Gastrocnemius medialis (tissue), 4 donors: ENCODE measurements at regions of chr6 and their contacts with region 1.

Region 1: GRCh38 chr6:133368664-133369063 is 127.5 kb downstream of the EYA4 start:
- DNase-seq: peak; percentile 76 to 85
- ATAC-seq: peak; percentile 92 to 97
- H3K4me3 ChIP-seq: no peak overlapping the region
- H3K27ac ChIP-seq: peak overlapping the region; percentile 68 to 80 (median 74)
- H3K4me1 ChIP-seq: peaks cover 51 to 81% of the 10 kb centered on the region in 2 donors
- H3K27me3 ChIP-seq: no peaks in the 10 kb centered on the region
- CTCF ChIP-seq: peak; percentile 36 to 73 (median 55)
- POLR2A ChIP-seq: no peak

Region 2: DNA sequence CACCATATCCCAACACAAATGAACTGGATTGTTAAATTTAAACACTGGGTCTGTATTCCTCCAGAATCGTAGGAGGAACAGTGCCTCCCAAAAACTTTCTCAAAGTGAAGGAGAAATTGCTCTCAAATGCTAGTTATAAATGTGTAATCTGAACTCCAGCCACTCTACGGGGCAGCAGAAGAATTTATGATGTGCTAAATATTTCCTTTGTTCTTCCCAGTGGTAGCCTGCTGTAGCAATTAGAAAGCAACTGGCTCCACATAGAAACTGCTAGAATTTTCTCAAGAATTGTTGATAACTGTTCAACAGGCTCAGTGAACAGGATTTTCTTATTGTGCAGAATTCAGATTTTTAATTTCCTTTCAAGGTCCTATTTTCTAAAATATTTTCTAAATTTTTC is 177.3 kb before region 1 on chr6:
- in situ Hi-C with region 1: no loop called
- intact Hi-C with region 1: loop called (anchors 5 kb)
- DNase-seq: no peak
- ATAC-seq: peak; percentile 38 to 49
- H3K4me3 ChIP-seq: no peak overlapping the region
- H3K27ac ChIP-seq: peak overlapping the region in 1 of 4 donors; percentile 61
- H3K4me1 ChIP-seq: peaks cover 5 to 9% of the 10 kb centered on the region in 2 donors
- H3K27me3 ChIP-seq: no peaks in the 10 kb centered on the region
- CTCF ChIP-seq: no peak
- POLR2A ChIP-seq: no peak

Region 3: GRCh38 chr6:133286765-133287164 is 81.9 kb before region 1 on chr6:
- in situ Hi-C with region 1: no loop called
- intact Hi-C with region 1: loop called (anchors 1 kb)
- DNase-seq: no peak
- ATAC-seq: peak in 1 of 2 donors; percentile 57
- H3K4me3 ChIP-seq: no peak overlapping the region
- H3K27ac ChIP-seq: peak overlapping the region in 2 of 4 donors; percentile 29 to 67
- H3K4me1 ChIP-seq: peaks cover 45 to 62% of the 10 kb centered on the region in 2 donors
- H3K27me3 ChIP-seq: no peaks in the 10 kb centered on the region
- CTCF ChIP-seq: peak in 3 of 5 experiments; percentile 26 to 40 (median 37)
- POLR2A ChIP-seq: no peak